Heart left ventricle (tissue), 16 donors: ENCODE measurements at regions of chr3 and their contacts with region 1.

Region 1: DNA sequence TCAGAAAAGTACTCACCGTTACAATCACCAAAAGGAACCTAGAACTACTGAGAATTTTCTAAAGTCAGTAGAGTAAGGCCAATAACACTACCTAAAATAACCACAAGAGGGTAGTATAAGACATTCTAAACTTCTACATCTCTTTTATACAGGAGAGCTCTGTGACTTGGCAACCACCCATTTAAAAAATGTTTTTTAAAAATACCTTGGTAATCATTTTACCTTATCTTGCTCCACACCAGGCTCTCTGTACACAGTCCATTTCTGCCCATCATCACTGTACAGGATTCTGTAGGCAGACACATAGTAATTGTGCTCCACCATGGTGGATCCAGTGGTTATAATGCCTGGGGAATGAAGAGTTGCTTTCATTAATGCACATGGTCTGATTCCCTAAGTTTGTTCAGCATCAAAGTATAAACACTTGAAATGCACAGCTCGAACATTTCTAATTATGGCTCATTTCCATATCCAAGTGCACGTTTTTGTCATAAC is 54.5 kb downstream of the ST3GAL6 start:
- DNase-seq: no peak
- ATAC-seq: peak; percentile 43 to 78 (median 74)
- H3K4me3 ChIP-seq: no peak overlapping the region
- H3K27ac ChIP-seq: no peak overlapping the region
- H3K4me1 ChIP-seq: peaks cover 0 to 7% (median 2%) of the 10 kb centered on the region in 12 donors
- H3K27me3 ChIP-seq: no peaks in the 10 kb centered on the region
- CTCF ChIP-seq: peak; percentile 78 to 88 (median 80)
- POLR2A ChIP-seq: no peak

Region 2: GRCh38 chr3:98039322-98040024 is 778.1 kb before region 1 on chr3:
- intact Hi-C with region 1: loop called in 2 of 10 experiments (anchors 2 to 10 kb)
- DNase-seq: peak in 3 of 5 donors; percentile 13 to 31 (median 19)
- ATAC-seq: peak; percentile 58 to 94 (median 84)
- H3K4me3 ChIP-seq: peak overlapping the region in 9 of 12 donors; percentile 20 to 51 (median 36)
- H3K27ac ChIP-seq: no peak overlapping the region
- H3K4me1 ChIP-seq: peaks cover 0 to 6% (median 0%) of the 10 kb centered on the region in 12 donors
- H3K27me3 ChIP-seq: peaks cover 0 to 25% (median 0%) of the 10 kb centered on the region in 9 donors
- CTCF ChIP-seq: peak; percentile 74 to 94 (median 84)
- POLR2A ChIP-seq: no peak

Region 3: DNA sequence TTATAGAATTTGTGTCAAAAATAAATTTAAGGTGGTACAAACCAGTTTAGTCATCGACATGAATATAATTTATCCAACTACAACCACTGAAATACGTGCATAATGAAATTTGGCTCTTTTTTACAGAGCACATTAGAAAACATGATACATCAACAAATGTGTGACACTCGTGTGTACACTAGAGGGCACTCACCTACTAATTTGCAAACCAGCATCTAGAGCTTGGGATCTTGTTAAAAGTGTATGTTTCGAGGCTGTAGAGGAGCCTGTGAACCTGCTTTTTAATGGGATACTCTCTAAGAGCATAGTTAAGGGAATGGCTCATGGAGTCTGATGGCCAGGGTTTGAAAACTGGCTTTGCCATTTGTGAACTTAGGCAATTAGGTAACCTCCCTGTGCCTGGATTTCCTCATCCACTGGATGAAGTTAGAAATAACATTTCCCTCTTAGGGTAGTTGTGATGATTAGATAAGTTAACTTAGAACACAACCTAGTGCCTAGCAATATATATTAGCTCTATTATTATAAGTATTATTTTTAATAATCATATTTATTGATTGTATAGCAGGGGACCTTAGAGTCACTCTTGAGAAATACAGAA is 215.4 kb before region 1 on chr3:
- intact Hi-C with region 1: loop called in 8 of 10 experiments (anchors 1 to 5 kb)
- DNase-seq: peak in 2 of 5 donors; percentile 24 to 41
- ATAC-seq: peak; percentile 64 to 93 (median 85)
- H3K4me3 ChIP-seq: no peak overlapping the region
- H3K27ac ChIP-seq: no peak overlapping the region
- H3K4me1 ChIP-seq: peaks cover 0 to 9% (median 0%) of the 10 kb centered on the region in 12 donors
- H3K27me3 ChIP-seq: no peaks in the 10 kb centered on the region
- CTCF ChIP-seq: peak; percentile 61 to 83 (median 75)
- POLR2A ChIP-seq: no peak

Region 4: DNA sequence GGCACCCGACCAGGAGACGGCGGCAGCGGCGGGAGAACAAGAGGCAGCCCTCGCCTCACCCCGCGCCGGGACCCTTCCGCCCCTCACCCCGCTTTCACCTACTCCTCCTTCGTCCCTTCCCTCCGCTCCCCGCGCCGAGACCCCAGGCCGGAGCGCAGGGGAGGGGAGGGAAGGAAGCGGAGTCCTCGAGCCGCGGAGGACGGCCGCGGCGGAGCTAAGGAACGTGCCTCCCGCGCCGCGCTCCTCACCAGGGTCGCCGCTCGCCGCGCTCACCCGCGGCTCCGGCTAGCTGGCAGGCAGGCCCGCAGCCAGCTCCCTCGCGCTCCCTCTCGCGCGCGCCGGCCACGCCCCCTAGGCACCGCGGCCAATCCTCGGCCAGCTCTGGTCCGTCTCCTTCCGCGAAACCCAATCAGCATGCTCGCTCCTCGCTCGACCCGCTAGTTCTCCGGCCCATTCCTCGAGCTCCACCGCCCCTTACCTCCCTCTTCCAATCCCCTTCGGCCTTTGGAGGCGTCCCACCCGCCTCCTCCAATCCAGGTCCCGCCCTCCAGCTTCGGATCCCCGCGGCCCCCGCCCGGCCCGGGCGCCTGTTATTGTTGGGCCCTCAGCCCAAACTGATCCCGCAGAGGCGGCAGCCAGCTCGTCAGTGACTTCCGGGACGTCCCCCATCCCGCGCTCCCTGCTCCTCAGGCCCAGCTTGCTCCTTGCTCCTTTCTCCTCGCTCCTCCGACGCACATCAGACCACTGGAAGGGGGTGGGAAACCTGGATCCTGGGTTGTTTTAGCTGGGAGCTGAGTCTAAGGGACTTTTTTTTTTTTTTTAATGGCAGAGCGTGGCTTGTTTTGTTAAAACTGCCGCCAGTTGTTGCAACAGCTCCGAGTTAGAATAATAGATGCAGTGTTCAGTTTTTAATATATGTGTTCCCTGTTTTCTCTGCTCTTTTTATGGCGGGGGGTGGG is 84.1 kb after region 1 on chr3 and contains the start of gene DCBLD2:
- intact Hi-C with region 1: loop called in 2 of 10 experiments (anchors 5 to 10 kb)
- DNase-seq: peak; percentile 98 to 99 (median 99)
- ATAC-seq: peak; percentile 99
- H3K4me3 ChIP-seq: peak within 1 kb of the TSS; percentile 78 to 99 (median 93)
- H3K27ac ChIP-seq: peak within 1 kb of the TSS; percentile 72 to 97 (median 96)
- H3K4me1 ChIP-seq: peaks cover 0 to 46% (median 19%) of the 10 kb centered on the region in 12 donors
- H3K27me3 ChIP-seq: no peaks in the 10 kb centered on the region
- CTCF ChIP-seq: no peak
- POLR2A ChIP-seq: peak; percentile 79 to 95
- total RNA-seq, gene DCBLD2: 28.3 to 76.6 (median 62.0) TPM

Region 5: DNA sequence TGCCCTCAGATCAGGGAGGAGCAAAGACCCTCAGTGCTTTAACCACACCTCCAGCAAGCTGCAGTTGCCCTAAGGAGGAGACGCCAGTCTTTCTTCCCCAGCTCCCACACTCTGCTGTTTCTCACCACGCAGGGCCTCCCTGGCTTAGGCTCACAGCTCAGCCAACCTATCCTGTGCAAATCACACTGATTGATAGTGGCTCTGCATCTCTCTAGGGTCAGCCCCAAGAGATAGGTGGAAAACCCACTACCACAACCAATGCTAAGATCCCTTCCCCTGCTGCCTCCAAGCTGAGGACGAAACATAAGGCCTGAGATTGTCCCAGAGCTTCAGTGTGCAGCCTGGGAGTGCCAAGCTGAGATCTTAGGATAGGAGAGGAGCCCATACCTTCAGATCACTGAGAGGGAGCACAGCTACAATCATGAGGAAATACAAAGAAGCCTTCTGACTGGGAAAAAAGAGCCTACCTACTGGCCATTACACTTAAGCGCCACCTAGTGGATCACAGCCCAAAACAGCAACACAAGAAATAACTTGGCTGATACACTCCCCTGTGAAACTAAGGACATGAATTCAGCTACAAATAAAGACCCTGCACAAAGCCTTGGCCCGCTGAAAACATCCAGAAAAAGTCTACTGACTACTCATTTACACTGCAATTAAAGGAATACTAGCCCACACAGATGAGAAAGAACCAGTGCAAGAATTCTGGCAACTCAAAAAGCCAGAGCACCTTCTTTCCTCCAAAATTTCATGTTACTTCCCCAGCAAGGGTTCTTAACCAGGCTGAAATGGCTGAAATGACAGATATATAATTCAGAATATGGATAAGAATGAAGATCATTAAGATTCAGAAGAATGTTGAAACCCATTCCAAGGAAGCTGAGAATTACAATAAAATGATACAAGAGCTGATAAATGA is 355.4 kb after region 1 on chr3:
- intact Hi-C with region 1: loop called in 5 of 10 experiments (anchors 5 to 10 kb)
- DNase-seq: peak in 3 of 5 donors; percentile 23 to 38 (median 36)
- ATAC-seq: peak in 2 of 4 donors; percentile 39 to 46
- H3K4me3 ChIP-seq: no peak overlapping the region
- H3K27ac ChIP-seq: no peak overlapping the region
- H3K4me1 ChIP-seq: no peaks in the 10 kb centered on the region
- H3K27me3 ChIP-seq: no peaks in the 10 kb centered on the region
- CTCF ChIP-seq: peak; percentile 10 to 74 (median 50)
- POLR2A ChIP-seq: no peak